ENCODE measurements at regions of chr3 and their contacts with region 1.

Region 1: GRCh38 chr3:11379233-11379823 is 107.1 kb downstream of the ATG7 start:
- DNase-seq: no peak
- ATAC-seq: peak; percentile 54
- H3K4me3 ChIP-seq: peak overlapping the region; percentile 12
- H3K27ac ChIP-seq: peak overlapping the region; percentile 39
- H3K4me1 ChIP-seq: peaks cover 16% of the 10 kb centered on the region
- H3K27me3 ChIP-seq: no peaks in the 10 kb centered on the region
- CTCF ChIP-seq: peak; percentile 63

Region 2: DNA sequence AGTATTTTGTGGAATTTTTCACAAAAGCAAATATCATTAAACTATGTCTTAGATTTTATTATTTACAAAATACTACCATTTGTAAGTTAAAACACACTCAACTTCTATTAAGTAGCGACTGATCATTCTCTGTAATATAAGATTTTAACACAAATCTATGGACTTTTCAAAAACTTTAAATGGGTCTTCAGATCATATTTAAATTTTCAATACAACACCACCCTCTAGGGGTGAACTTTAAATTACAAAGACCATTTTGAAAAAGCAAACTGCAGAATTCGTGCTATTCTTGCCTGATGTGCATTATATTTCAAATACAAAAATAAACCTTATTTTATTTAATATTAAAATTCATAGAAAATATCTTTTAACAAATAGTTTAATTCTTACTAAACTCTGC is 272.6 kb after region 1 on chr3:
- intact Hi-C with region 1: loop called (anchors 5 kb)
- DNase-seq: no peak
- ATAC-seq: no peak
- H3K4me3 ChIP-seq: no peak overlapping the region
- H3K27ac ChIP-seq: no peak overlapping the region
- H3K4me1 ChIP-seq: peaks cover 11% of the 10 kb centered on the region
- H3K27me3 ChIP-seq: no peaks in the 10 kb centered on the region
- CTCF ChIP-seq: peak; percentile 63

Region 3: GRCh38 chr3:11757441-11757875 is 378.1 kb after region 1 on chr3:
- intact Hi-C with region 1: no loop called
- DNase-seq: no peak
- ATAC-seq: no peak
- H3K4me3 ChIP-seq: no peak overlapping the region
- H3K27ac ChIP-seq: no peak overlapping the region
- H3K4me1 ChIP-seq: no peaks in the 10 kb centered on the region
- H3K27me3 ChIP-seq: no peaks in the 10 kb centered on the region
- CTCF ChIP-seq: no peak

Region 4: GRCh38 chr3:11803977-11804892 is 424.9 kb after region 1 on chr3:
- intact Hi-C with region 1: loop called (anchors 5 kb)
- DNase-seq: no peak
- ATAC-seq: peak; percentile 93
- H3K4me3 ChIP-seq: no peak overlapping the region
- H3K27ac ChIP-seq: no peak overlapping the region
- H3K4me1 ChIP-seq: no peaks in the 10 kb centered on the region
- H3K27me3 ChIP-seq: no peaks in the 10 kb centered on the region
- CTCF ChIP-seq: peak; percentile 77